ENCODE measurements at regions of chr2 and their contacts with region 1.

Region 1: DNA sequence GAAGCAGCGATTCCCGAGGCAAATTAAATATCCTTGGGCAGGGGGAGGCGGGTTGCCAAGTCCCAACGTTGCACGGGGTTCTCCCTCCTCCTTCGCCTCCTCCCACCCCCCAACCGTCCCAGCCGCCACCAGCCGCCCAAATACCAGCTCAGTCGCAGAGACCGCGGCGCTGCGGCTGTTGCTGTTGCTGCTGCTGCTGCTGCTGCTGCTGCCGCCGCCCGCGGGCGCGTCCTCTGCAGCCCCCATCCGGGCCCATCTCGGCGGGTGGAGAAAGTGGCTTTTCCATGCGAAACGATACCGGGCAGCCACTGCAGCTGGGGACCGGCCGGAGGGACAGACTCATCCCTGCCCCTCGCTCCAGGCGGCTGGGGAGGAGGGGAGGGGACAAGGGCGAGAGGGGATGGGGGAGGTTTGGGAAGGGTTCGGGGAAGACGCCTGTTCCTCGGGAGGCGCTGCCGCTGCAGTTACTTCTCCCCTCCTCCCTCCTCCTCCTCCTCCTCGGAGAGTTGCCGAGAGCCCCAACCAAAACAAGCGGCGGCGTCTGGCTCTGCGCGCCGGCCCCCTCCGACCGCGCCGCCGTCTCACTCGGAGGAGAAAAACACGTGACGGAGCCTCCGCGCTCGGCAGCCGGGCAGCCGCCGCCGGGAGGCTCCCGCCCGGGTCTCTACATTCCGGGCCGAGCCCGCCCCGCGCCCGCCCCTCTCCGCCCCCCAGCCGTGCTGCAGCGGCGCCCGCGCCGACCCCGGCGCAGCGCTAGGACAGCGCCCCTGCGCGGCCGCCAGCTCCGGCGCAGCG is at the start of gene IRS1:
- DNase-seq: peak in 8 of 9 donors; percentile 35 to 77 (median 61)
- ATAC-seq: peak; percentile 76
- H3K4me3 ChIP-seq: peak within 1 kb of the TSS; percentile 77
- H3K4me3 Mint-ChIP-seq: peak within 1 kb of the TSS; percentile 89 to 97 (median 91)
- H3K27ac ChIP-seq: peak within 1 kb of the TSS; percentile 70
- H3K27ac Mint-ChIP-seq: peak within 1 kb of the TSS; percentile 52 to 92 (median 75)
- H3K4me1 ChIP-seq: peaks cover 9 to 13% of the 10 kb centered on the region in 2 donors
- H3K4me1 Mint-ChIP-seq: peaks cover 11 to 40% (median 26%) of the 10 kb centered on the region in 7 donors
- H3K27me3 ChIP-seq: no peaks in the 10 kb centered on the region
- H3K27me3 Mint-ChIP-seq: peaks cover 2 to 14% (median 11%) of the 10 kb centered on the region in 5 donors
- total RNA-seq, gene IRS1: 1.3 to 7.1 (median 4.4) TPM

Region 2: DNA sequence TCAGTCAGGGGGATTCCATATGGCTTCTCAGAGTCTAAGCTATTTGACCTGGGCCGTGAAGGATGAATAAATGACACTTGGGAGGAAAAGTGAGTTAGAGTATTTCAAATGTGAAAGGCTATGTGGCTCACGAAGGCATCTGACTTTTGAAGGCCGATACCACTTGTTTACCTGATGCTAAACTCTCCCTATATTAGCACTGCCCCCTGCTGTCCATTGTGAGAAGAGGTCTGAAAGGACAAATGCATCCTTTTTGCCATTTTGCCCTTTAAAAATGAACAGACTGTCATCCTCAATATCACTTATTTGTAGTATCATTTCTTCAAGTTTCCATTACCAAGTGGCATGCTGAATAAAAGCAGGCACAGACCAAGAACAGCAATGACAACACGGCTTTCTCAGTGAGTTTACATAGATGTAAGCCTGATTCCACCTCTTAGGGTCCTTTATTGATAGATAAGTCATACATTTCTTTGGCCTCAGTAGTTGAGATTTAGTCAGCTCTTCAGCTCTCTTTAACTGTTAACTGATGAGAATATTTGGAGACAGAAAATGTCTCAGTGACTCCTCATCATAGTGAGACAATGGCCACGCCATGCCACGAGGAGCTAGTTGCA is 1797.2 kb before region 1 on chr2:
- CTCF ChIA-PET with region 1: no interaction called
- POLR2A ChIA-PET with region 1: no interaction called
- intact Hi-C with region 1: loop called in 1 of 2 experiments (anchors 5 kb)
- DNase-seq: peak in 8 of 9 donors; percentile 48 to 75 (median 70)
- ATAC-seq: peak; percentile 93
- H3K4me3 ChIP-seq: no peak overlapping the region
- H3K4me3 Mint-ChIP-seq: peak overlapping the region in 9 of 10 donors; percentile 9 to 70 (median 40)
- H3K27ac ChIP-seq: peak overlapping the region; percentile 23
- H3K27ac Mint-ChIP-seq: peak overlapping the region; percentile 64 to 90 (median 87)
- H3K4me1 ChIP-seq: peaks cover 27 to 43% of the 10 kb centered on the region in 2 donors
- H3K4me1 Mint-ChIP-seq: peaks cover 51 to 97% (median 90%) of the 10 kb centered on the region in 7 donors
- H3K27me3 ChIP-seq: no peaks in the 10 kb centered on the region
- H3K27me3 Mint-ChIP-seq: no peaks in the 10 kb centered on the region

Region 3: GRCh38 chr2:225889446-225889850 is 909.9 kb before region 1 on chr2:
- CTCF ChIA-PET with region 1: interaction called, 25 read pairs
- POLR2A ChIA-PET with region 1: no interaction called
- intact Hi-C with region 1: no loop called
- DNase-seq: peak in 4 of 9 donors; percentile 4 to 16 (median 15)
- ATAC-seq: peak; percentile 50
- H3K4me3 ChIP-seq: no peak overlapping the region
- H3K4me3 Mint-ChIP-seq: no peak overlapping the region
- H3K27ac ChIP-seq: no peak overlapping the region
- H3K27ac Mint-ChIP-seq: no peak overlapping the region
- H3K4me1 ChIP-seq: no peaks in the 10 kb centered on the region
- H3K4me1 Mint-ChIP-seq: no peaks in the 10 kb centered on the region
- H3K27me3 ChIP-seq: no peaks in the 10 kb centered on the region
- H3K27me3 Mint-ChIP-seq: peaks cover 0 to 15% (median 4%) of the 10 kb centered on the region in 5 donors

Region 4: GRCh38 chr2:226215902-226216503 is 583.4 kb before region 1 on chr2:
- CTCF ChIA-PET with region 1: interaction called, 20 read pairs
- POLR2A ChIA-PET with region 1: no interaction called
- intact Hi-C with region 1: loop called in 1 of 2 experiments (anchors 1 kb)
- DNase-seq: peak; percentile 9 to 59 (median 37)
- ATAC-seq: peak; percentile 77
- H3K4me3 ChIP-seq: no peak overlapping the region
- H3K4me3 Mint-ChIP-seq: no peak overlapping the region
- H3K27ac ChIP-seq: no peak overlapping the region
- H3K27ac Mint-ChIP-seq: no peak overlapping the region
- H3K4me1 ChIP-seq: no peaks in the 10 kb centered on the region
- H3K4me1 Mint-ChIP-seq: peaks cover 0 to 2% (median 0%) of the 10 kb centered on the region in 7 donors
- H3K27me3 ChIP-seq: no peaks in the 10 kb centered on the region
- H3K27me3 Mint-ChIP-seq: peaks cover 3 to 12% (median 9%) of the 10 kb centered on the region in 5 donors

Region 5: GRCh38 chr2:226649871-226650660 is 149.3 kb before region 1 on chr2:
- CTCF ChIA-PET with region 1: no interaction called
- POLR2A ChIA-PET with region 1: no interaction called
- intact Hi-C with region 1: loop called (anchors 1 kb)
- DNase-seq: peak in 5 of 9 donors; percentile 21 to 45 (median 37)
- ATAC-seq: peak; percentile 62
- H3K4me3 ChIP-seq: no peak overlapping the region
- H3K4me3 Mint-ChIP-seq: peak overlapping the region in 9 of 10 donors; percentile 8 to 61 (median 51)
- H3K27ac ChIP-seq: no peak overlapping the region
- H3K27ac Mint-ChIP-seq: peak overlapping the region in 8 of 9 donors; percentile 48 to 97 (median 78)
- H3K4me1 ChIP-seq: peaks cover 0 to 9% of the 10 kb centered on the region in 2 donors
- H3K4me1 Mint-ChIP-seq: peaks cover 5 to 55% (median 23%) of the 10 kb centered on the region in 7 donors
- H3K27me3 ChIP-seq: no peaks in the 10 kb centered on the region
- H3K27me3 Mint-ChIP-seq: peaks cover 0 to 18% (median 0%) of the 10 kb centered on the region in 5 donors

Region 6: GRCh38 chr2:227106845-227107759 is 307.7 kb after region 1 on chr2:
- CTCF ChIA-PET with region 1: no interaction called
- POLR2A ChIA-PET with region 1: no interaction called
- intact Hi-C with region 1: loop called in 1 of 2 experiments (anchors 2 kb)
- DNase-seq: peak in 5 of 9 donors; percentile 4 to 26 (median 14)
- ATAC-seq: peak; percentile 50
- H3K4me3 ChIP-seq: no peak overlapping the region
- H3K4me3 Mint-ChIP-seq: no peak overlapping the region
- H3K27ac ChIP-seq: no peak overlapping the region
- H3K27ac Mint-ChIP-seq: no peak overlapping the region
- H3K4me1 ChIP-seq: no peaks in the 10 kb centered on the region
- H3K4me1 Mint-ChIP-seq: no peaks in the 10 kb centered on the region
- H3K27me3 ChIP-seq: no peaks in the 10 kb centered on the region
- H3K27me3 Mint-ChIP-seq: peaks cover 0 to 7% (median 0%) of the 10 kb centered on the region in 5 donors

Measured in naive thymus-derived CD4-positive, alpha-beta T cell (primary cell).